ENCODE measurements at regions of chr11 and their contacts with region 1.

Region 1: DNA sequence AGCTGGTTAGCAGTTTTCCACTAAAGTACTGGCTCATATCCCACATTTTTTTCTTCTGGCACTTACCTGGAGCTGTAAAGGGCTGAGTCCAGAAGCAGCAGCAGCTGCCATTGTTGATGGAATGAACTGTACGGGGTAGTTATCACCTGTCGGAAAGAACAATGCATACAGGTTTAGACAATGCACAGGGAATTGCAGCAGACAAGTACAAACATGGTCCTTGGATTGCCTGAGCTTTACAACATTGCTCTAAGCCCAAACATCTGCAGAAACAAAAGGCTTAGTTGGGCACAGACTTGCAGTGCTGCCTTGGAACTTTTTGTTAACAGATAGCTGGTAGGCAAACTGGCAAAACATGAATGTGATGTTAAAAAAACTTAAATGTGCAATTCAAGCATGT is 258.8 kb downstream of the SOX6 start:
- DNase-seq: peak; percentile 60 to 64
- H3K4me3 ChIP-seq: no peak overlapping the region
- H3K4me3 Mint-ChIP-seq: no peak overlapping the region
- H3K27ac Mint-ChIP-seq: peak overlapping the region; percentile 64
- H3K4me1 ChIP-seq: peaks cover 43% of the 10 kb centered on the region
- H3K4me1 Mint-ChIP-seq: peaks cover 40% of the 10 kb centered on the region
- H3K27me3 ChIP-seq: no peaks in the 10 kb centered on the region
- H3K27me3 Mint-ChIP-seq: no peaks in the 10 kb centered on the region
- CTCF ChIP-seq: no peak

Region 2: GRCh38 chr11:16001899-16002426 is 95.6 kb before region 1 on chr11:
- CTCF ChIA-PET with region 1: no interaction called
- POLR2A ChIA-PET with region 1: no interaction called
- intact Hi-C with region 1: loop called (anchors 5 kb)
- DNase-seq: peak; percentile 71 to 76
- H3K4me3 ChIP-seq: peak overlapping the region; percentile 14
- H3K4me3 Mint-ChIP-seq: peak overlapping the region; percentile 48
- H3K27ac Mint-ChIP-seq: peak overlapping the region; percentile 48
- H3K4me1 ChIP-seq: peaks cover 21% of the 10 kb centered on the region
- H3K4me1 Mint-ChIP-seq: peaks cover 22% of the 10 kb centered on the region
- H3K27me3 ChIP-seq: no peaks in the 10 kb centered on the region
- H3K27me3 Mint-ChIP-seq: no peaks in the 10 kb centered on the region
- CTCF ChIP-seq: no peak

Region 3: GRCh38 chr11:16154715-16155396 is 57.3 kb after region 1 on chr11:
- CTCF ChIA-PET with region 1: no interaction called
- POLR2A ChIA-PET with region 1: no interaction called
- intact Hi-C with region 1: loop called (anchors 2 kb)
- DNase-seq: peak; percentile 70 to 72
- H3K4me3 ChIP-seq: no peak overlapping the region
- H3K4me3 Mint-ChIP-seq: peak overlapping the region; percentile 24
- H3K27ac Mint-ChIP-seq: peak overlapping the region; percentile 86
- H3K4me1 ChIP-seq: peaks cover 51% of the 10 kb centered on the region
- H3K4me1 Mint-ChIP-seq: peaks cover 10% of the 10 kb centered on the region
- H3K27me3 ChIP-seq: no peaks in the 10 kb centered on the region
- H3K27me3 Mint-ChIP-seq: no peaks in the 10 kb centered on the region
- CTCF ChIP-seq: no peak